CD4-positive, alpha-beta memory T cell (primary cell): ENCODE measurements at regions of chr10 and their contacts with region 1.

Region 1: DNA sequence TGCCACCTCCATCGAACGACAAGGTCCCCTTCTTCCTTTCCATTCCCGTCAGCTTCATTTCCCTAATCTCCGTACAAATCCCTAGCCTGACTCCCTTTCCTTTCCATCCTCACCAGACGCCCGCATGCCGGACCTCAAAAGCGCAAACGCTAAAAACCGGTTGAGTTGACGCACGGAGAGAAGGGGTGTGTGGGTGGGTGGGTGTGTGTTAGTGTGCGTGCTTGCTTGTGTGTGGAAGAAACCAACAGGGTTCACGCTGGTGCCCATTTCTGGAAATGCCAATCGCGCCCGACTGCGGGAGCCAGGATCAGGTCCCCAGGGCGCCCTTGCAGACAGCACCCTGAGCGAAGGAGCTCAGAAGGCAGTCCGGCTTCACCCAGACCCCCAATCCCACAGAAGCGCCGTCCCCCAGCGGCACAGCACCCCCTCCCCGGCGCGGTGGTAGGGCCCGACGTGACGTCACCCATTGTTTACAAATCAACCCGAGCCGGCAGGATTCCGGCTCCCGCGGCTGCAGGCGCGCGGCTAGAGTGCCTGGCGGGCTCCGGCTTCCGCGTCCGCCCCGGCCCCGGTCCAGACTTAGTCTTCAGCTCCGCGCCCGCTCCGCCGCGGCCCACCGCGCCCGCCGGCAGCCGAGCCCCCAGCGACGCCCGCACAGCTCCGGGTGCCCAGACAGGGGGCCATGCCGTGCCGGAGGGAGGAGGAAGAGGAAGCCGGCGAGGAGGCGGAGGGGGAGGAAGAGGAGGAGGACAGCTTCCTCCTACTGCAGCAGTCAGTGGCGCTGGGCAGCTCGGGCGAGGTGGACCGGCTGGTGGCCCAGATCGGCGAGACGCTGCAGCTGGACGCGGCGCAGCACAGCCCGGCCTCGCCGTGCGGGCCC is at the start of gene FRAT1:
- DNase-seq: peak; percentile 90 to 97 (median 94)
- H3K4me3 ChIP-seq: peak within 1 kb of the TSS; percentile 50 to 84
- H3K4me3 Mint-ChIP-seq: peak within 1 kb of the TSS; percentile 93 to 99 (median 96)
- H3K27ac ChIP-seq: peak within 1 kb of the TSS; percentile 99
- H3K27ac Mint-ChIP-seq: peak within 1 kb of the TSS; percentile 96 to 100 (median 99)
- H3K4me1 ChIP-seq: peaks cover 21% of the 10 kb centered on the region
- H3K4me1 Mint-ChIP-seq: peaks cover 16 to 44% (median 31%) of the 10 kb centered on the region in 4 donors
- H3K27me3 ChIP-seq: no peaks in the 10 kb centered on the region
- H3K27me3 Mint-ChIP-seq: peaks cover 0 to 3% of the 10 kb centered on the region in 2 donors
- total RNA-seq, gene FRAT1: 20.2 to 21.8 TPM

Region 2: DNA sequence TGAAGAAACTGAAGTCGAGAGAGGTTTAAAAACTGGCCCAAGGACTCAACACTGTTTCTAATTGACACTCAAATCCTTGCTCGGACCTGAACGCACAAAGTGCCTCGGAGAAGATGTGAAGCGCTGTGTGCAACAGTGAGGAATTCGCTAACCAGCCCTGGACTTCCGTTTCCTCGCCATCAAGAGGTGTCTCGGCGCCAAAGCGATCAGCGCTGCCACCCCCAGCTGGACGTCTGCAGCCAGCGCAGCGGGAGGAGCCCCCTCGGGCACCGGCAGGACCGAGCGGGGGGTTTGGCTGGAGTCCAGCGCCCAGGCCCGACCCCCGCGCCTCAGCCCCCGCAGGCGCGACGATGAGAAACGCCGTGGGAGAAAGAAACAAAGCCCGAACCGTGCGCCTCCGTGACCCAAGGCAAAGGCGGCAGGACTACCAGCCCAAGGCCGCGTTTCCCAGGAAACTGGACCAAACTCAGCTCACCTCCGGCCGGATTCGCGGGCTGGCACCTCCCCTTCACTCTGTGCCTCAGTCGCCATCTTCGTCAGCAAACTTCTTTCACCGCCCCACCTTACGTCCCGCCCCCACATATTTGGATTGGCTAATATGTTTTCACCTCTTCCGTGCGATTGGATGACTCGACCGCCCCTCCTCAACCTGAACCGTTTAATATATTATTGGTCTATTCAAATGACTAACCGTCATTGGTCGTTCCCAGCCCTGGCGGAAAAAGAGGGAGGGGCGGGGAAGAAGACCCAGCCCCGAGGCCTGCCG is 26.7 kb before region 1 on chr10 and contains the start of gene ARHGAP19:
- CTCF ChIA-PET with region 1: interaction called, 4 read pairs
- POLR2A ChIA-PET with region 1: interaction called, 42 read pairs
- intact Hi-C with region 1: loop called (anchors 1 kb)
- DNase-seq: peak; percentile 94 to 98 (median 95)
- H3K4me3 ChIP-seq: peak within 1 kb of the TSS; percentile 76 to 85
- H3K4me3 Mint-ChIP-seq: peak within 1 kb of the TSS; percentile 90 to 99 (median 94)
- H3K27ac ChIP-seq: peak within 1 kb of the TSS; percentile 78
- H3K27ac Mint-ChIP-seq: peak within 1 kb of the TSS; percentile 85 to 97 (median 95)
- H3K4me1 ChIP-seq: peaks cover 11% of the 10 kb centered on the region
- H3K4me1 Mint-ChIP-seq: peaks cover 8 to 25% (median 20%) of the 10 kb centered on the region in 4 donors
- H3K27me3 ChIP-seq: no peaks in the 10 kb centered on the region
- H3K27me3 Mint-ChIP-seq: peaks cover 1 to 3% of the 10 kb centered on the region in 2 donors
- total RNA-seq, gene ARHGAP19: 17.0 to 19.3 TPM

Region 3: DNA sequence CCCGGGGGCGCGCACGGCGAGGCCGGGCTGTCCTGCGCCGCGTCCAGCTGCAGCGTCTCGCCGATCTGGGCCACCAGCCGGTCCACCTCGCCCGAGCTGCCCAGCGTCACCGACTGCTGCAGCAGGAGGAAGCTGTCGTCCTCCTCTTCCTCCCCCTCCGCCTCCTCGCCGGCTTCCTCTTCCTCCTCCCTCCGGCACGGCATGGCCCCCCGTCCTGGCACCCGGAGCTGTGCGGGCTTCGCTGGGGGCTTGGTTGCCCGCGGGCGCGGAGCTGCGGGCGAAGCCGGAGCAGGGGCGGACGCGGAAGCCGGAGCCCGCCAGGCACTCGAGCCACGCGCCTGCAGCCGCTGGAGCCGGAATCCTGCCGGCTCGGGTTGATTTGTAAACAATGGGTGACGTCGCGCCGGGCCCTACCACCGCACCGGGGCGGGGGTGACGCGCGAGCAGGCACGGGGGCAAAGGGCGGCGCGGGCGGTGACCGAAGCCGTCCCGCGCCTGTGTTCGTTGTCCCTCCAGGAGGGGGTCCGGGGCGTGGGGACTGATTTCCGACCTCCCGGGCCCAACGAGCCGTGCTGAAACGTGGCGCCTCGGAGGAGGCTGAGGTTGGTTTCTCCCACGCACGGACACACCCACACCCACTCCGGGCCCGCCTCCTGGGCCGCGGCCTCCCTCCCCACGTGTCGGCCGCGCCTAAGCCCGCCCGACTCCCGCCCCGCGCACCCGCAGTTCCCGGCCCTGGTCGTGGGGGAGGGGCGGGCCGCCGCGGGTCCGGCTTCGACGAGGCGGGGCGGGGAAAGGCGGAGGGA is 15.6 kb after region 1 on chr10 and contains the start of gene FRAT2:
- CTCF ChIA-PET with region 1: interaction called, 11 read pairs
- POLR2A ChIA-PET with region 1: interaction called, 265 read pairs
- intact Hi-C with region 1: loop called (anchors 1 kb)
- DNase-seq: peak; percentile 86 to 95 (median 92)
- H3K4me3 ChIP-seq: peak within 1 kb of the TSS; percentile 64 to 67
- H3K4me3 Mint-ChIP-seq: peak within 1 kb of the TSS; percentile 88 to 95 (median 92)
- H3K27ac ChIP-seq: peak within 1 kb of the TSS; percentile 98
- H3K27ac Mint-ChIP-seq: peak within 1 kb of the TSS; percentile 88 to 95 (median 93)
- H3K4me1 ChIP-seq: peaks cover 35% of the 10 kb centered on the region
- H3K4me1 Mint-ChIP-seq: peaks cover 26 to 44% (median 34%) of the 10 kb centered on the region in 4 donors
- H3K27me3 ChIP-seq: no peaks in the 10 kb centered on the region
- H3K27me3 Mint-ChIP-seq: peaks cover 0 to 1% of the 10 kb centered on the region in 2 donors
- total RNA-seq, gene FRAT2: 28.7 to 30.4 TPM

Region 4: DNA sequence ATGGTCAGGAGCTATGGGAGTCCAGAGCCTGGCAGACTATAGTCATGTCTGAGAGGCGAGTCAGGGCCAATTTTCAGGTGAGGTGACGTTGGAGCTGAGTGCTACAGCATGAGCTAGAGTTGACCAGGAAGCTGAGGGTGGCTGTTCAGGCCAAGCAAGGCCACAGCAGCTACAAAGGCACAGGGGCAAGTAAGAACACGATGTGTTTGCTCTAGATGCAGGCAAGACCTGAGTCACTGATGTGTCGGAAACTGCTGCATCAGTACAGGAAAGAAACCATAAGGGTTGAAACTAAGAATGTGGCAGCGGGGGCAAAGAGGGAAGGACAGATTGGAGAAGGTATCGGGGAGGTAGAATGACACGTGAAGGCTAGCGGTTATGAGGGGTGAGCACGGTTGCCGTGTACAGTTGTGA is 93.9 kb after region 1 on chr10:
- CTCF ChIA-PET with region 1: no interaction called
- POLR2A ChIA-PET with region 1: interaction called, 11 read pairs
- intact Hi-C with region 1: no loop called
- DNase-seq: no peak
- H3K4me3 ChIP-seq: no peak overlapping the region
- H3K4me3 Mint-ChIP-seq: peak overlapping the region in 4 of 8 donors; percentile 2 to 60 (median 23)
- H3K27ac ChIP-seq: no peak overlapping the region
- H3K27ac Mint-ChIP-seq: peak overlapping the region; percentile 34 to 91 (median 79)
- H3K4me1 ChIP-seq: peaks cover 38% of the 10 kb centered on the region
- H3K4me1 Mint-ChIP-seq: peaks cover 20 to 43% (median 31%) of the 10 kb centered on the region in 4 donors
- H3K27me3 ChIP-seq: no peaks in the 10 kb centered on the region
- H3K27me3 Mint-ChIP-seq: no peaks in the 10 kb centered on the region

Region 5: DNA sequence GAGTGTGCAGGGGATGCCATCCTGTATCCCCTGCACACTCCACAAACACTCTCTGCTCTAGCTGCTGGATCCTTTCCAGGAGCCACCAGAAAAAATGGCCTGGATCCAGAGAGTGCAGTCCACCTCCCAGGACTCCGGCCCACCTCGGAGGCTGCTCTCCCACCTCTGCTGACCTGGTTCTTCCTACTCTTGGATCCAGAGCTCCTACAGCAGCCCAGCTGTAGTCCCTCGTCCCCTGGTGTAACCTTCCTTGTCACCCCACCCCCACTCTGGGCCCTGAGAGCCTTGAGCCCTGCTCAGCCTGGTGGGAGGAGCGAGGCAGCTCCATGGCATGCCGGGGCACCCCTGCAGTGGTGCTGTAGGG is 585.0 kb after region 1 on chr10:
- CTCF ChIA-PET with region 1: no interaction called
- POLR2A ChIA-PET with region 1: no interaction called
- intact Hi-C with region 1: no loop called
- DNase-seq: no peak
- H3K4me3 ChIP-seq: no peak overlapping the region
- H3K4me3 Mint-ChIP-seq: no peak overlapping the region
- H3K27ac ChIP-seq: no peak overlapping the region
- H3K27ac Mint-ChIP-seq: no peak overlapping the region
- H3K4me1 ChIP-seq: no peaks in the 10 kb centered on the region
- H3K4me1 Mint-ChIP-seq: no peaks in the 10 kb centered on the region
- H3K27me3 ChIP-seq: no peaks in the 10 kb centered on the region
- H3K27me3 Mint-ChIP-seq: peaks cover 7 to 16% of the 10 kb centered on the region in 2 donors